Common myeloid progenitor, CD34-positive (primary cell): ENCODE measurements at regions of chr16 and their contacts with region 1.

Region 1: DNA sequence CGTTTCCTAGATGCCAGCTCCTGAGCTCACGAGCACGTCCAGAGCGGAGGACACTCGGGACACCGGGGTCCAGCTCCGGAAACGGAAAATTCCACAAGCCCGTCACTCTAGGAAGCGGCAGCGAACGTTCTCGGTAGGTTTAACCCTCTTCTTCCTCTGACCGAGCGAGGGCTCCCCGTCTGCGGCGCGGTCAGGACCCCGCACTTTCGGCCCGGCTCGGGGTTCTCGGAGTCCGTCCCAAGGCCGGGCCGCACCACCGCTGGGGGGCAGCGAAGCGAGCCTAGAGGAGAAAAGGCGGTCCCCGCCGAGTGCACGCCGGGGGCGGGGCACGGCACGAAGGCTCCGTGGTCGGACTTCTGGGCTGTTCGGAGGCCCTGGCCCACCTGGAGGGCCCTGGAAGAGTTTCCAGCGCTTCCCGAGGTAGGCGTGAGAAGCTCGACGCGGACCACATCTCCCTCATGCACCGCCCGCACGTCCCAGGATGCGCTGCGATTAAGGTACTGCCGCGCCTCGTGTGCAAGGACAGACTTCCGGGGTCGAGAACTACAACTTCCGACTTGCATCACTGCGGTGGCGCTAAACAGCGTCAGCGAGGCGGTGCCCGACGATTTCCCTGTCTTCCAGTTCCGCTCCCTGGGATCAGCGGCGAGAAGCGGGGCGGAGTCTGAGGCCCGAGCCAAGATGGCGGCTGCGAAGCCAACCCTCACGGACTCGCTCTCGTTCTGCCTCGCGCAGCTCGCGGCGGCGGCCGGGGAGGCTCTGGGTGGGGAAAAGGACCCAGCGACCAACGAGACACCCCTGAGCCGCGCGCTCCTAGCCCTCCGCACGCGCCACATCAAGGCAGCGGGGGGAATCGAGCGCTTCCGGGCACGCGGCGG is at the start of gene ARMC5:
- DNase-seq: peak; percentile 98 to 99 (median 99)
- H3K4me3 ChIP-seq: peak within 1 kb of the TSS; percentile 66 to 90 (median 86)
- H3K27ac ChIP-seq: peak within 1 kb of the TSS; percentile 97 to 98
- H3K4me1 ChIP-seq: peaks cover 2 to 59% (median 50%) of the 10 kb centered on the region in 4 experiments
- H3K27me3 ChIP-seq: no peaks in the 10 kb centered on the region

Region 2: DNA sequence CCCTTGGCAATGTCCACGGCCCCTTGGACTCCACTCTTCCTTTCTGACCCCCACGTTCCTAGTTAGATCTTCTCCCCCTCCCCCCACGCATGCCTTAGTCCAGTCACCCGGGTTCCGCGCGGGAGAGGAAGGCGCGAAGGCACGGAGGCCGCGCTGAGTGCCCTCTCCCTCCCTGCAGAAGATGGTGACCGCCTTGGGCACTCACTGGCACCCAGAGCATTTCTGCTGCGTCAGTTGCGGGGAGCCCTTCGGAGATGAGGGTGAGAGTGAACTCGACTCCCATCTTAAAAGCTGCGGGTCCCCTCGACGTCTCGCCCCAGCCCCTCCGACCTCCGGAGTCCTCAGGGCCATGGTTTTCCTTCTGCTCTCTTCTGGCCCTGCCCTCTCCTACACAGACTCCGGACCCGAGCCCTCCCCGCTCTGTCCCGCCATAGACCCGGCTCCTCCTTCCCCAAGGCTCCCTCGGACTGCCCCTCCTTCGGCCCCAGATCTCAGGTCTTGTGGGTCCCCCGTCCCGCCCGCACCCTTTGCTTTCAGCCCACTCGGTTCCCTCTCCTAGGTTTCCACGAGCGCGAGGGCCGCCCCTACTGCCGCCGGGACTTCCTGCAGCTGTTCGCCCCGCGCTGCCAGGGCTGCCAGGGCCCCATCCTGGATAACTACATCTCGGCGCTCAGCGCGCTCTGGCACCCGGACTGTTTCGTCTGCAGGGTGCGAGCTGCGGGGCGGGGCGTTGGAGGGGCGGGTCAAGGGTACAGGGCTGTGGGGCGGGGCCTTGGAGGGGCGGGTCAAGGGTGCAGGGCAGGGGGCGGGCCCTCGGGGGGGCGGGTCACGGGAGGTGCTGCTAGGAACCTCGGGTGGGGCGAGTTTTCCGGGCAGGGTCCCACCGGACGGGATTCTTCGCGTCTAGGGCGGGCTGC is 17.5 kb after region 1 on chr16:
- CTCF ChIA-PET with region 1: interaction called, 28 read pairs
- POLR2A ChIA-PET with region 1: interaction called, 4 read pairs
- DNase-seq: peak; percentile 78 to 87 (median 84)
- H3K4me3 ChIP-seq: peak overlapping the region; percentile 40 to 81 (median 67)
- H3K27ac ChIP-seq: peak overlapping the region in 1 of 2 experiments; percentile 49
- H3K4me1 ChIP-seq: peaks cover under 1 to 47% (median 39%) of the 10 kb centered on the region in 4 experiments
- H3K27me3 ChIP-seq: no peaks in the 10 kb centered on the region

Region 3: GRCh38 chr16:31868691-31869167 is 409.6 kb after region 1 on chr16:
- CTCF ChIA-PET with region 1: interaction called, 13 read pairs
- POLR2A ChIA-PET with region 1: interaction called, 4 read pairs
- DNase-seq: peak; percentile 67 to 81 (median 75)
- H3K4me3 ChIP-seq: peak overlapping the region in 5 of 7 experiments; percentile 26 to 58 (median 33)
- H3K27ac ChIP-seq: peak overlapping the region in 1 of 2 experiments; percentile 89
- H3K4me1 ChIP-seq: peaks cover 8 to 35% (median 27%) of the 10 kb centered on the region in 4 experiments
- H3K27me3 ChIP-seq: no peaks in the 10 kb centered on the region